Breast epithelium (tissue), 4 donors: ENCODE measurements at regions of chr2 and their contacts with region 1.

Region 1: DNA sequence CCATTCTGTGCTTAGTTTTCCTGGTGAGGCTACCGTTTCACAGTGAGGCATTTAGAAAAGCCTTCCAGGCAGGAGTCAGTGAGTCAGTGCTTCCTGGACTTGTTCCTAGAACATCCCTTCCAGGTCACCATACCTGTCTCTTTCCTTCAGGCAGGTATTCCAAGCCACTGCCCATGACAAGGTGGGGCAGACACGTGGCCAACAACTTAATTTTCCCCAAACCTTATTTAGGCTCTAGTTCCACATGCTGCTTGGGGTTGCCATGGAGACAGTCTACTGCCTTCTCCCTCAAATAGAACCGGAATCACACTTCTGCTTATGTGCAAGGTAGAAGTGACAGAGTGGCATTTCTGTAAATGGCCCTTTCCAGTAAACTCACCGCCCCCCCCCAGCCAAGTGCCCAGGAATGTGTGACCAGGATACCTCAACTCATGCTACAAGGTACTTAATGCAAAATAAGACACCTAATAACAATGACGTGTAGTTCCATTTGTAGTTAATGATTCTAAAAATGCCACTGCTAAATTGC is 258.3 kb downstream of the PRKCE start:
- DNase-seq: peak; percentile 73 to 95
- H3K4me3 ChIP-seq: no peak overlapping the region
- H3K27ac ChIP-seq: peak overlapping the region; percentile 83 to 87
- H3K4me1 ChIP-seq: peaks cover 0 to 10% of the 10 kb centered on the region in 2 donors
- H3K27me3 ChIP-seq: no peaks in the 10 kb centered on the region
- CTCF ChIP-seq: no peak
- POLR2A ChIP-seq: no peak

Region 2: GRCh38 chr2:46535360-46535759 is 625.6 kb after region 1 on chr2:
- intact Hi-C with region 1: no loop called
- DNase-seq: no peak
- H3K4me3 ChIP-seq: no peak overlapping the region
- H3K27ac ChIP-seq: no peak overlapping the region
- H3K4me1 ChIP-seq: no peaks in the 10 kb centered on the region
- H3K27me3 ChIP-seq: no peaks in the 10 kb centered on the region
- CTCF ChIP-seq: no peak
- POLR2A ChIP-seq: no peak

Region 3: GRCh38 chr2:47334356-47335136 is 1424.8 kb after region 1 on chr2:
- intact Hi-C with region 1: loop called (anchors 5 kb)
- DNase-seq: no peak
- H3K4me3 ChIP-seq: no peak overlapping the region
- H3K27ac ChIP-seq: no peak overlapping the region
- H3K4me1 ChIP-seq: no peaks in the 10 kb centered on the region
- H3K27me3 ChIP-seq: no peaks in the 10 kb centered on the region
- CTCF ChIP-seq: no peak
- POLR2A ChIP-seq: no peak